Right cardiac atrium (tissue), 5 donors: ENCODE measurements at regions of chr3 and their contacts with region 1.

Region 1: GRCh38 chr3:57169872-57170623 is 4.9 kb upstream of the IL17RD start:
- DNase-seq: peak; percentile 79 to 88 (median 86)
- ATAC-seq: peak; percentile 83 to 87
- H3K4me3 ChIP-seq: peak overlapping the region; percentile 50
- H3K27ac ChIP-seq: no peak overlapping the region
- H3K4me1 ChIP-seq: peaks cover 4% of the 10 kb centered on the region
- H3K27me3 ChIP-seq: no peaks in the 10 kb centered on the region

Region 2: DNA sequence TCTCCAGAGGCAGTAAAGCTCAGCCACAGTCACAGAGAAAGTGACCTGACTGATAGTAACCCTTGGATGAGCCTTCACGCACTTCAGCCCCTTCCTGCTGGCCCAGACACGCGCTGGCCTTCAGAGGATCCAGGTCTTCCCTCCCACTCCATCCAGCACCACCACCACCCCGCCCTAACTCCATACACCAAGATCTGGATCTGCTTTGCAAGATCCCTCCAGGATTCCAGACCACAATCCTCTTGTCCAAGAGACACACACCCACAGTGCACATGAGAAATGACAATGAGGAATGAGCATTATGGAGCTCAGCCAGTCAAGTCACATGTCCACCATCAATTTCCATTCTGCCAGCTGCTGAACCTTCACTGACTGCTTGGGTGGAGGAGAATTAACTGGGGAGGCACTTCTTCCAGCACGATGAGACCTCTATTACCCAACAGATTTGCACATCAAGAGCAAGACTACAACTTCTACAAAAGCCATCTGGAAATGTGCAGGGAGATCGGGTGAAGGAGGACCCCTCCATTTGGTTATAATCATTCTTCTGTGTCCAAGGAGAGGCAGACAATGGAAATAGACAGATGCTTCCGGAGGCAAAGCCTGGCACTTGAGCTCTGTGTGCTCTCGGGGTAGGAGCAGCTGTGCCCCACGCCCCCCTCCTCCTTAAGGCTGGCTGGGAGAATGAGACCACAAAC is 121.9 kb before region 1 on chr3:
- intact Hi-C with region 1: no loop called
- DNase-seq: no peak
- ATAC-seq: peak; percentile 56 to 65
- H3K4me3 ChIP-seq: no peak overlapping the region
- H3K27ac ChIP-seq: no peak overlapping the region
- H3K4me1 ChIP-seq: peaks cover 5% of the 10 kb centered on the region
- H3K27me3 ChIP-seq: no peaks in the 10 kb centered on the region

Region 3: DNA sequence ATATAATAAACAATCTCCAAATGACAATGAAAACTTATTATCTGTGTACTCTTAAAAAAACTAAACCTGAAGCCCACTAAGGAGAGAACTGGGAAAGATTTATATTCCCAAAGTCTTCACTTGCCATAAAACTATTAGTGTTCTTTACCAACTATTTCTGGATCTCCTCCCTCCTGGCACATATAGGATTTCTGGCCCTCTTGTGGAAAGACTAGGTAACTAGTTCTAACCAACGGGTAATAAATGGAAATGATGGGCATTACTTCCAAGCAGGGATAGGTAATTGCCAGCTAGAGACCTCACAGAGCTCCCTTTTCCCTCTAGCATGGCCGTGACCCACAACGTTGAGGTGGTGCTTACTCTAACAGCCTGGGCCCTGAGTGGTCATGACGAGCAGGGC is 264.0 kb after region 1 on chr3:
- intact Hi-C with region 1: loop called in 1 of 4 experiments (anchors 5 kb)
- DNase-seq: no peak
- ATAC-seq: no peak
- H3K4me3 ChIP-seq: no peak overlapping the region
- H3K27ac ChIP-seq: no peak overlapping the region
- H3K4me1 ChIP-seq: no peaks in the 10 kb centered on the region
- H3K27me3 ChIP-seq: no peaks in the 10 kb centered on the region